ENCODE measurements at regions of chr3 and their contacts with region 1.

Region 1: DNA sequence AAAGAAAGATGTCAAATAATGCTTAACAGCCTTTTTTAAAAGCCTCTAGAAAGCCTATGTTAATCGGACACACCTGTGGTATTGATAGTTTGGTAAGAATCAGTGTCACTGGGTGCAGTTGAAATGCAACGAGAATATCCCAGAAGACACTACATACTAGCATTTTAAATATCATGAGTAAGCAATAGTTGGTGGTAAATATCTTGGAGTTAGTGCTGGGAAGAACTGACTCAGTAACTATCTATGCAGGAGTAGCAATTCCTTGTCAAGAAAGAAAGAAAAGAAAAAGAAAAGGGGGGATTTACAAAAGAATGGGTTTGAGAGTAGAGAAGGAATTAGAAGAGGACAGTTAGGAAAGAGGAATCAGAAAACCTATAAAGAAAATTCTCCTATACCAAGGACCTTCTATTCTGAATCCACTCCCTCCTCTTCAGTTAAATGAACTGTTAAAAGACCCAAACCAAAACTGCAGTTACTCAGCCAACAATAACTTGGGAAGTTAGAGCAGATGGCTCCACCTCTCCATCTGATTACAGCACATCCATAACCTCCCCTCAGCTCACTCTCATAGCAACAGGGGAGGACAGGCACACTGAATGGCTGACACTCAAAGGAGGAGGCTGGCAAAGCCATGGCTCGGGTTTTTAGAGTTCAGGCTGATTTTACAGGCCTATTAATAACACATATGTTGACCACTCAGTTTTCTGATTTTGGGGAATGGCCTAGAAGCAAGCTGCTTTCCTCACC is 207.6 kb upstream of the MDFIC2 start:
- DNase-seq: no peak
- H3K4me3 ChIP-seq: no peak overlapping the region
- H3K27ac ChIP-seq: no peak overlapping the region
- H3K4me1 ChIP-seq: no peaks in the 10 kb centered on the region
- H3K27me3 ChIP-seq: no peaks in the 10 kb centered on the region
- CTCF ChIP-seq: no peak
- POLR2A ChIP-seq: no peak

Region 2: GRCh38 chr3:70064194-70064779 is 455.8 kb before region 1 on chr3:
- intact Hi-C with region 1: loop called (anchors 10 kb)
- DNase-seq: peak; percentile 12
- H3K4me3 ChIP-seq: no peak overlapping the region
- H3K27ac ChIP-seq: no peak overlapping the region
- H3K4me1 ChIP-seq: no peaks in the 10 kb centered on the region
- H3K27me3 ChIP-seq: no peaks in the 10 kb centered on the region
- CTCF ChIP-seq: peak in 3 of 4 experiments; percentile 60 to 74 (median 72)
- POLR2A ChIP-seq: no peak

Region 3: GRCh38 chr3:70108072-70108471 is 412.0 kb before region 1 on chr3:
- intact Hi-C with region 1: no loop called
- DNase-seq: no peak
- H3K4me3 ChIP-seq: no peak overlapping the region
- H3K27ac ChIP-seq: no peak overlapping the region
- H3K4me1 ChIP-seq: no peaks in the 10 kb centered on the region
- H3K27me3 ChIP-seq: no peaks in the 10 kb centered on the region
- CTCF ChIP-seq: peak in 2 of 4 experiments; percentile 25 to 37
- POLR2A ChIP-seq: no peak

Region 4: GRCh38 chr3:70840106-70840875 is 320.2 kb after region 1 on chr3:
- intact Hi-C with region 1: no loop called
- DNase-seq: no peak
- H3K4me3 ChIP-seq: no peak overlapping the region
- H3K27ac ChIP-seq: no peak overlapping the region
- H3K4me1 ChIP-seq: no peaks in the 10 kb centered on the region
- H3K27me3 ChIP-seq: no peaks in the 10 kb centered on the region
- CTCF ChIP-seq: no peak
- POLR2A ChIP-seq: no peak

Region 5: DNA sequence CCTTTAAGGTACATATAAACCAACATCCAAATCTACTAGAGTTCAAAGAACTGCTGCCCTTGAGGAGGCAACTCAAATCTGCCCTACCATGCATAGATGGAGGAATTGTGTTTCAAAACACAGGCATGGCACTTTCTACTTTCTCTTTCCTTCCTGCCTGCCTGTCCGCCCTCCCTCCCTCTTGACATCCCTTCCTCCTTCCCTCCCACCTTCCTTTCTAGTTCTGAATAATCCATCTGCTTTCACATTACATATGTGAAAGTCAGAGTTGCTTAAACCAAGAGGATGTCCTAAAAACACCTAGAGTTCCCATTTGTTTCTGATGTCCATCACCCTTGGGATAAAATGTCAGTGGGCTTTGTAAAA is 525.8 kb after region 1 on chr3:
- intact Hi-C with region 1: no loop called
- DNase-seq: no peak
- H3K4me3 ChIP-seq: no peak overlapping the region
- H3K27ac ChIP-seq: peak overlapping the region in 1 of 2 donors; percentile 3
- H3K4me1 ChIP-seq: peaks cover 18% of the 10 kb centered on the region
- H3K27me3 ChIP-seq: no peaks in the 10 kb centered on the region
- CTCF ChIP-seq: no peak
- POLR2A ChIP-seq: no peak

Measured in prostate gland (tissue), 2 donors.